ENCODE measurements at regions of chr3 and their contacts with region 1.

Region 1: GRCh38 chr3:187319699-187320302 is 28.3 kb upstream of the MASP1 start:
- H3K4me3 ChIP-seq: no peak overlapping the region
- H3K27ac ChIP-seq: no peak overlapping the region
- H3K4me1 ChIP-seq: no peaks in the 10 kb centered on the region
- CTCF ChIP-seq: peak; percentile 72

Region 2: DNA sequence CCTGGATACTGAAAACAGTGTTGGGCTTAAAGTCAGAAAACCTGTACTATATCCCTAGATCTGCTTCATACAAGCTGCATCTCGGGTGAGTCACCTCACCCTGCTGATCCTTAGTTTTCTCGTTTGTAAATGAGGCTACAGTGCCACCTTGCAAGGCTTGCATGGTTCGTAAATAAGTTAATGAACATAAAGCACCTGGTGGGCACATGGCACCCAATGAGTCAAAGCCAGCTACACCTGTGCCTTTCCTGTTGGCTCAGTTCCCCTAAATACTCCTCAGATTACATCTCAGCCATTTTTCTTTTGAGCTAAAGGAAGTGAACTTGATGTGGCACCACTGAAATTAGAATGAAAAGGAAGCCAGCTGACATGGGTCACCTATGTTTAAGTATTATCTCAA is 96.0 kb before region 1 on chr3:
- CTCF ChIA-PET with region 1: interaction called, 89 read pairs
- POLR2A ChIA-PET with region 1: no interaction called
- H3K4me3 ChIP-seq: no peak overlapping the region
- H3K27ac ChIP-seq: no peak overlapping the region
- H3K4me1 ChIP-seq: no peaks in the 10 kb centered on the region
- CTCF ChIP-seq: no peak

Region 3: DNA sequence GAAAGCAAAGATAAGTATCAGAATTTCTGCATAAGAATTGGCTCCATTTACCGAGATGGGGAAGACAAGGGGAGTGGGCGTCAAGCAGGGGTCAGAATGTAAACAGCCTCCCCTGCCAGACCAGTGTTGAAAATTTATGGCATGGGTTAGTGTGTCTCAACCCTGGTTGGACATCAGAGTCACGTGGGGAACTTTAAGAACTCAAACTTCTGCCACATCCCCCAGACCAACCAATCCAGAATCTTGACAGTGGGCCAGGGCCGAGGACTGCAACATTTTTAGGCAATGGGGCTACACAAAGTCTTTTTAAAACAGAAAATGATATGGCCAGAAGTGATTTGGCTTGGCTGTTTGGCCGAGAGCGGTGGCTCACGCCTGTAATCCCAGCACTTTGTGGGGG is 13.9 kb before region 1 on chr3:
- CTCF ChIA-PET with region 1: interaction called, 40 read pairs
- POLR2A ChIA-PET with region 1: no interaction called
- H3K4me3 ChIP-seq: no peak overlapping the region
- H3K27ac ChIP-seq: no peak overlapping the region
- H3K4me1 ChIP-seq: no peaks in the 10 kb centered on the region
- CTCF ChIP-seq: no peak

Region 4: DNA sequence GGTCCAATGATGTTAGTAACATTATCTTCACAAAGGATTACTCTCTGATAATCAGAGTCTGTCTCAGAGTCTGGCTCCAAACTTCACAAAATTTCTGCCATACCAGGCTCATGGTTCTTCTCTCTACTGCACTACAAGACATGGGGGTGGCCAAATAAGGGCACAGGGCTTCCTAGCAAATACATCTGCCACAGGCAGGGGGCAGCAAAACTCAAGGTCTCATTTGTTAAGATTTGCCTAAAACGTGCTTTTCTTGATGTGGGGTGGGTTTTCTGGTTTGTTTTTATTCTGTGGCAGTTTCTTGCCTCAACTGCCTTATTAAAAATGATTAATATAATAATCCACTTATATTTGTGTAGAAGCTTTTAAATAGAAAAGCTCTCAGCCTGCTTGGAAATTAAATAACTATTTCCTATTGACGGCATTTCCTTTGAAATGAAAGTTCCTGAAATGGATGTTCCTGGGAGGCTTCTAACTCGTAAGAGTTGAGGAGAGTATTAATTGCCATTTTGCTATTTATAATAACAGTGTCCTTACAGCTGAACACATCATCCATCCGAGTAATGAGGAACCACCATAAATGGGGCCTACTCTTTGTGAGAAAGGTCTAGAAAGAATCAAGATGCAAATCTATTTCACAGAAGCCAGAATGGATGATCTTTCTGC is 296.6 kb after region 1 on chr3:
- CTCF ChIA-PET with region 1: interaction called, 33 read pairs
- POLR2A ChIA-PET with region 1: no interaction called
- H3K4me3 ChIP-seq: no peak overlapping the region
- H3K27ac ChIP-seq: no peak overlapping the region
- H3K4me1 ChIP-seq: no peaks in the 10 kb centered on the region
- CTCF ChIP-seq: no peak

Region 5: GRCh38 chr3:187669675-187670504 is 350.1 kb after region 1 on chr3 and contains the start of gene SST:
- CTCF ChIA-PET with region 1: interaction called, 407 read pairs
- POLR2A ChIA-PET with region 1: no interaction called
- H3K4me3 ChIP-seq: no peak within 1 kb of the TSS
- H3K27ac ChIP-seq: no peak within 1 kb of the TSS
- H3K4me1 ChIP-seq: no peaks in the 10 kb centered on the region
- CTCF ChIP-seq: no peak

Region 6: DNA sequence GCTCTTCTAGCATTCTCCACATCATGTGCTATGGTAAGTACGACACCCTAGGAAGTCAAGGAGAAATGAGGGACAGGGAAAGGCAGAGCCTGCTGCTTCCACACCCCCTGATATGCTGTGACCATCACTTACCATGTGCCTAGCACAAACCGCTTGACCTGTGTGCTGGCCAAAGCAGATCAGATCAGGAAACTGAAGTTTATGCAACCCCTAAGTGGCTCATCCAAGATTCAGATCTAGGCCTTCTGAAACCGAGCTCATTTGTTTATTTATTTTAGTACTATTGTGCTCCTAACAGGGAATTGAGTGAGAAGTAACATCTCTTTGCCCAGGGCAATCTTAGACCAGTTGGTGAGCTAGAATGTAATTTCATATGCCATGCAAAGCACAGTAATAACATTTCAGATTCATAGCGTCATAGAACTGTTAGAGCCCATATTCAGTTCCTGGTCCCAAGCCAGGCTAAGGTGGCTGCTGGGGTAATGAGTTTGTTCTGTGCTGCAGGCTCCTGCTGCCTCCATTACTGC is 382.8 kb after region 1 on chr3 and contains the start of gene RTP2:
- CTCF ChIA-PET with region 1: interaction called, 16 read pairs
- POLR2A ChIA-PET with region 1: no interaction called
- H3K4me3 ChIP-seq: no peak within 1 kb of the TSS
- H3K27ac ChIP-seq: no peak within 1 kb of the TSS
- H3K4me1 ChIP-seq: no peaks in the 10 kb centered on the region
- CTCF ChIP-seq: no peak

Region 7: GRCh38 chr3:187719628-187720336 is 400.0 kb after region 1 on chr3:
- CTCF ChIA-PET with region 1: interaction called, 104 read pairs
- POLR2A ChIA-PET with region 1: no interaction called
- H3K4me3 ChIP-seq: no peak overlapping the region
- H3K27ac ChIP-seq: no peak overlapping the region
- H3K4me1 ChIP-seq: no peaks in the 10 kb centered on the region
- CTCF ChIP-seq: no peak